ENCODE measurements at regions of chr11 and their contacts with region 1.

Region 1: GRCh38 chr11:65040847-65041621 is at the start of gene SAC3D1:
- DNase-seq: peak; percentile 74 to 94 (median 88)
- ATAC-seq: peak; percentile 95
- H3K4me3 ChIP-seq: peak within 1 kb of the TSS; percentile 86
- H3K4me3 Mint-ChIP-seq: peak within 1 kb of the TSS; percentile 90 to 96 (median 94)
- H3K27ac ChIP-seq: peak within 1 kb of the TSS; percentile 78
- H3K27ac Mint-ChIP-seq: peak within 1 kb of the TSS; percentile 69 to 95 (median 92)
- H3K4me1 ChIP-seq: peaks cover 3 to 9% of the 10 kb centered on the region in 2 donors
- H3K4me1 Mint-ChIP-seq: peaks cover 11 to 25% (median 20%) of the 10 kb centered on the region in 7 donors
- H3K27me3 ChIP-seq: no peaks in the 10 kb centered on the region
- H3K27me3 Mint-ChIP-seq: no peaks in the 10 kb centered on the region
- total RNA-seq, gene SAC3D1: 2.7 to 18.2 (median 8.6) TPM

Region 2: GRCh38 chr11:64924102-64924851 is 116.8 kb before region 1 on chr11 and contains the start of gene PPP2R5B:
- CTCF ChIA-PET with region 1: no interaction called
- POLR2A ChIA-PET with region 1: no interaction called
- intact Hi-C with region 1: loop called (anchors 1 to 5 kb)
- DNase-seq: peak; percentile 79 to 92 (median 89)
- ATAC-seq: peak; percentile 95
- H3K4me3 ChIP-seq: peak within 1 kb of the TSS; percentile 67
- H3K4me3 Mint-ChIP-seq: peak within 1 kb of the TSS; percentile 89 to 99 (median 96)
- H3K27ac ChIP-seq: peak within 1 kb of the TSS; percentile 81
- H3K27ac Mint-ChIP-seq: peak within 1 kb of the TSS; percentile 95 to 100 (median 98)
- H3K4me1 ChIP-seq: peaks cover 11 to 15% of the 10 kb centered on the region in 2 donors
- H3K4me1 Mint-ChIP-seq: peaks cover 9 to 24% (median 14%) of the 10 kb centered on the region in 7 donors
- H3K27me3 ChIP-seq: no peaks in the 10 kb centered on the region
- H3K27me3 Mint-ChIP-seq: no peaks in the 10 kb centered on the region
- total RNA-seq, gene PPP2R5B: 11.9 to 19.1 (median 18.8) TPM

Region 3: DNA sequence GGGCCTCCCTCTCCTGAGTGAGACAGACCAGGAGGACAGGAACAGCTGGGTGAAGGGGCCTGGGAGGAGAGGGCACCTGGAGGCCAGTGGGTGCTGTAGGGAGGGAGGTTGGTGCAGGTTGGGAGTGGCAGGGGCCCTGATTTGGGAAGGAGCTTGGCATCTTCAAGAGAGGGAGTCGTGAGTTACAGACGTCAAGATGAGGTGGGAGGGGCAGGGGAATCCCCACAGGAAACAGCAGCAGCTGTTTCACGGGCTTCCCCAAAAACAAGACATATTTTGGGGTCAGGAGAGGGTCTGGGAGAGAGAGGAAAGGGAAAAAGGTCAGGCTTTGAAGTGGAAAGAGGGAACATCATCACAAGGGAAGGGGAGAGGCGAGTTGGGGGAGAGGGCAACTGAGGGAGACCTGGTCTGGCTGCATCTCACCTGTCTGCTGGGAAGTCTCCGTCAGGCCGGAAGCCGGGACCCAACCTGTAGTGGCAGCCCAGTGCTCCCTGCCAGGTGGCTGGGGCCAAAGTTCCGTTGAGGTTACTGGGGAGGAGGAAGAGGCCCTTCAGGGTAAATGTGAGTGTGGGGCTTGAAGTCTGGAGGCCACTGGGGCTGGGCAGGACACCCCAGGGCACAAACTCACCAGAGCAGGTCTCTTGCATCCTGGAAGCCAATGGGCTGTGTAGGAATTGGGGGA is 12.9 kb after region 1 on chr11:
- CTCF ChIA-PET with region 1: no interaction called
- POLR2A ChIA-PET with region 1: interaction called, 4 read pairs
- intact Hi-C with region 1: loop called in 1 of 2 experiments (anchors 2 kb)
- DNase-seq: peak in 7 of 9 donors; percentile 17 to 52 (median 39)
- ATAC-seq: peak; percentile 72
- H3K4me3 ChIP-seq: no peak overlapping the region
- H3K4me3 Mint-ChIP-seq: peak overlapping the region; percentile 41 to 85 (median 70)
- H3K27ac ChIP-seq: peak overlapping the region; percentile 56
- H3K27ac Mint-ChIP-seq: peak overlapping the region; percentile 24 to 92 (median 79)
- H3K4me1 ChIP-seq: peaks cover 3 to 12% of the 10 kb centered on the region in 2 donors
- H3K4me1 Mint-ChIP-seq: peaks cover 9 to 22% (median 14%) of the 10 kb centered on the region in 7 donors
- H3K27me3 ChIP-seq: no peaks in the 10 kb centered on the region
- H3K27me3 Mint-ChIP-seq: no peaks in the 10 kb centered on the region

Region 4: DNA sequence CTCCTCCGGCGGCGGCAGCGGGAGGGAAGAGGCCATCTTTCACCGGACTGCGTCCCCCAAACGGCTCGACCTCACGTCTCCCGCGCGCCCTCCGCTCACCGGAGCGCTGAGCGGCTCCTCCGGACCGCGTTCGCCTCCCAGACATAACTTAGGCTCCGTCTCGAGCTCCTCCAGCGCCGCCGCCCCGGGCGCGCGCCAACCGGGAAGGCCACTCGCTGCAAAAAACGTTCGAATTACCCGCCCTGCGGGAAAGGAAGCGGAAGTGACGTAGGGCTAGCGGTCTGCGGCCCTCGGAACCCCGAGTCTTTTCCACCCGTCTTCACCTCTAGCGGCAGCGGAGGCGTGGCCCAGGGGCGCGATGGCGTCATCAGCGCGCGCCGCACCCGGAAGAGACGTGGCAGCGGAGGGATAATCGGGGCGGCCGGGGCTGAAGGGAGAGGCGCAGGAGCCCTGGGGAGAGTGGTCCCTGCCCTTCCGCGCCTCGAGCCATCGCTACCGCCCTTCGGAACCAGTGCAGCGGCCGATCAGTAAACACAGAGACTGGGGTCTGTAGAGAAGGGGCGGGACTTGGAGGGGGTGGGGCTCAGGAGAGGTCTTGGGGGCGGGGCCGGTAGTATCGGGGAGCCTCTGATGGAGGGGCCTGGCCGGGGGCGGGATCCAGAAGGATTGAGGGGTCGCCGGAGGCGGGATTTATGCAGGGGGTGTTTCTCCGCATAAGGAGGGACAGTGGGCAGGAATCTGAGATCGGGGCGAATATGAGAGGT is 43.0 kb after region 1 on chr11 and contains the starts of genes CDCA5 and ZFPL1:
- CTCF ChIA-PET with region 1: no interaction called
- POLR2A ChIA-PET with region 1: no interaction called
- intact Hi-C with region 1: loop called (anchors 1 kb)
- DNase-seq: peak; percentile 94 to 98 (median 97)
- ATAC-seq: peak; percentile 96
- H3K4me3 ChIP-seq: peak within 1 kb of the TSS; percentile 61
- H3K4me3 Mint-ChIP-seq: peak within 1 kb of the TSS; percentile 88 to 99 (median 93)
- H3K27ac ChIP-seq: peak within 1 kb of the TSS; percentile 86
- H3K27ac Mint-ChIP-seq: peak within 1 kb of the TSS; percentile 94 to 99 (median 97)
- H3K4me1 ChIP-seq: peaks cover 13 to 14% of the 10 kb centered on the region in 2 donors
- H3K4me1 Mint-ChIP-seq: peaks cover 20 to 49% (median 27%) of the 10 kb centered on the region in 7 donors
- H3K27me3 ChIP-seq: no peaks in the 10 kb centered on the region
- H3K27me3 Mint-ChIP-seq: peaks cover 0 to 4% (median 0%) of the 10 kb centered on the region in 5 donors
- total RNA-seq, gene CDCA5: 0.56 to 68.1 (median 0.81) TPM
- total RNA-seq, gene ZFPL1: 29.9 to 53.0 (median 49.3) TPM

Region 5: GRCh38 chr11:65111744-65112414 is 70.8 kb after region 1 on chr11 and contains the start of gene TM7SF2:
- CTCF ChIA-PET with region 1: interaction called, 4 read pairs
- POLR2A ChIA-PET with region 1: interaction called, 4 read pairs
- intact Hi-C with region 1: loop called in 1 of 2 experiments (anchors 5 kb)
- DNase-seq: peak; percentile 84 to 94 (median 92)
- ATAC-seq: peak; percentile 82
- H3K4me3 ChIP-seq: peak within 1 kb of the TSS; percentile 83
- H3K4me3 Mint-ChIP-seq: peak within 1 kb of the TSS; percentile 85 to 97 (median 89)
- H3K27ac ChIP-seq: peak within 1 kb of the TSS; percentile 74
- H3K27ac Mint-ChIP-seq: peak within 1 kb of the TSS; percentile 80 to 100 (median 90)
- H3K4me1 ChIP-seq: peaks cover 33 to 36% of the 10 kb centered on the region in 2 donors
- H3K4me1 Mint-ChIP-seq: peaks cover 18 to 52% (median 38%) of the 10 kb centered on the region in 7 donors
- H3K27me3 ChIP-seq: no peaks in the 10 kb centered on the region
- H3K27me3 Mint-ChIP-seq: no peaks in the 10 kb centered on the region
- total RNA-seq, gene TM7SF2: 21.6 to 37.8 (median 30.8) TPM